ENCODE measurements at regions of chr5 and their contacts with region 1.

Region 1: DNA sequence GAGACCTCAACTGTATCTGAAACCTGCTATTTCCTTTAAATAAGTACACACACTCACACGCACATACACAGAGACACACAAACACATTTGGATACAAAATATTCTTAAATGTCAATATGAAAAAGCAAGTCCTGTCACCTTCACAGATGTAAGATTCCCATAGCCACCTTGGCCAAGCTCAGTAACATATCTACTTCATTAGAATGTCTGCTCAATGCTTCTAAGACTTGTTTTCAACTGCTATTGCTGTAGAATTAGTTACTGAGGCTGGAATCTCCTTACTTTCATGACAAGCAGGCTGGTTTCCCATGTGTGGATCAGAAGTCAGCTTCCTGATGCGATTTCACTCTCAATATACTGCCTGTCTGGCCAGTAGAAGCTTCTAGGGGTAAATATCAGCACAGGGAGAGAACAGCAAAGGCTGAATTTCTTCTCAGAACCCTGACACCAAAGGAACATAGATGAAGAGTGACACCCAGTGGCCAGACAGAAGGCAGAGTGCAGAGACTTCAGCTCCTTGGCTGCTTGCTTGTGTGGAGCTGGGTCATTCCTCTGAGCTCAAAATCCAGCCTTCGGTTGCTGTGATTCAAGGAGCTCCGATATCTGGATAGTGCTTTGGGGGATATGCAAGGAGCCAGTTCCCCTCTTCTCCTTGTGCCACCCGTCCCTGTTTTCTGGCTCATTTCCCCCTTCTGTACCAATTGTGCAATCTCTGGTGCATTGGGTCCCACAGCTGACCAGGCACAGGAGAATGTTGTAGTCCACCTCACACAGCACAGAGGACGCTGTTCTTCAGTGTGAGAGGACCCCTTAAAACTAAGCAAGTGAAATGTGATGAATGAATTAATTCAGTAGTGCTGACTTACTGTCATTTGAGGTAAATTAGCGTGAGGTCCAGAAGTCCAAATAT is 26.6 kb upstream of the ABLIM3 start:
- DNase-seq: peak; percentile 93
- H3K4me3 Mint-ChIP-seq: no peak overlapping the region
- H3K27ac Mint-ChIP-seq: peak overlapping the region; percentile 65
- H3K4me1 Mint-ChIP-seq: peaks cover 45% of the 10 kb centered on the region
- H3K27me3 Mint-ChIP-seq: no peaks in the 10 kb centered on the region
- CTCF ChIP-seq: peak; percentile 97

Region 2: DNA sequence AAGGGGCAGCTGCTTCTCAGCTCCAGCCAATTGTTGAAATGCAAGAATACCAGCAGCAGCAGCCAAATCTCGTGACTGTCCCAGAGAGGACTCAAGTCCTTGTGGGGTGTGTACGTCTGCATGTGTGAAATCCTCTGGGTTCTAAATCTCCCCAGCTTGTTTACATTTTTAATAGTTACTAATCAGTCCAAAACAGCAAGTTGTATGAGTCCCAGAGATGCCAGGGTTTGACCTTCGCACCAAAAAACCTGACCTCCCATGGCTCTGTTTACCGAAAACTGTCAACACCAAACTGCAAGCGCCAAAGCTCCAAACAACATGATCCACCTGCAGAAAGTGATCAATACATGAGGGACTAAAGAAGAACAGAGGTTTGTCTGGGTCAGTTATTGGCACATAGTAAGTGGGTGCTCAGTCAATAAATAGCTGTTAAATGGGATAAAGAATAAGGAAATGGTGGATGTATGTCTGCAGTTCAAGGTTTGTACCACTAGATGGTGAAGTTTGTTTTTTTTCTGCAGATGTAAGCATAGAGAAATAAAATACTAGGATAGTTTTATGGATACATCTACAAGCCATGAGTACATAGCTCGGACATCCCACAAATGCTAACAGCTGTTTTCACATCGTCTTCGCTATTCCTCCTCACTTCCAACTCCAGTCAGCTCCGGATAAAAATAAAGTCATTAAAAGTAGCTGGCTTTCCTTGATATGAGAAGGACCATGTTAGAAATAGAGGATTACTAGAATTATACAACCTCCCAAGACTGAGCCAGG is 373.5 kb before region 1 on chr5:
- CTCF ChIA-PET with region 1: interaction called, 732 read pairs
- POLR2A ChIA-PET with region 1: interaction called, 3 read pairs
- intact Hi-C with region 1: loop called (anchors 2 kb)
- DNase-seq: peak; percentile 77
- H3K4me3 Mint-ChIP-seq: no peak overlapping the region
- H3K27ac Mint-ChIP-seq: no peak overlapping the region
- H3K4me1 Mint-ChIP-seq: peaks cover 5% of the 10 kb centered on the region
- H3K27me3 Mint-ChIP-seq: no peaks in the 10 kb centered on the region
- CTCF ChIP-seq: peak; percentile 88

Region 3: GRCh38 chr5:148831590-148832565 is 282.8 kb before region 1 on chr5:
- CTCF ChIA-PET with region 1: interaction called, 30 read pairs
- POLR2A ChIA-PET with region 1: interaction called, 10 read pairs
- intact Hi-C with region 1: no loop called
- DNase-seq: no peak
- H3K4me3 Mint-ChIP-seq: peak overlapping the region; percentile 90
- H3K27ac Mint-ChIP-seq: peak overlapping the region; percentile 69
- H3K4me1 Mint-ChIP-seq: peaks cover 87% of the 10 kb centered on the region
- H3K27me3 Mint-ChIP-seq: no peaks in the 10 kb centered on the region
- CTCF ChIP-seq: no peak

Region 4: DNA sequence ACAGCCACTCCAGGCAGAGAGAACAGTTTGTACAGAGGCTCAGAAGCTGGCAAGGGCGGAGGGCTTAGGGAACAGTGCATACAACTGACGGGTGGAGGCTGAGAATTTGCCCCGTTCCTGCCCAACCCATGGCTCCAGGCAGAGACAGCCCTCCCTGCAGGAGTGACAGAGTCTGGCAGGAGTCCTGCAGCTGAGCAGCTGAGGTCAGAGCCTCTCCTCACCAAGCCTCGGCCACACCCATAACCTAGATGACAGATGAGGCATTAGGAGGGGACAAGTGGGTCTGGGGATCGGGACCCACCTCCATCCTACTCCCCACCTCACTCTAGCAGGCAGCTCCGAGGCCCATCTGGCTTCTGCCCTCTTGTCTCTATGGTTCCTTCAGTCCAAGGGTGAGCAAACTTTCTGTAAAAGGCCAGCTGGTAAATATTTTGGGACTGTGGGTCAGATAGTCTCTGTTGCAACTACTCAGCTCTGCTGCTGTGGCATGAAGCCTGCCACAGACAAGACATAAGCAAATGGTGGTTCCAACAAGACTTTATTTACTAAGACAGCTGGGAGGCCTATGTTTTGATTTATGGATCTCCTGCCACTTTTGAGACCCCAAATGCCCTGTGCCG is 135.4 kb before region 1 on chr5:
- CTCF ChIA-PET with region 1: interaction called, 18 read pairs
- POLR2A ChIA-PET with region 1: interaction called, 4 read pairs
- intact Hi-C with region 1: no loop called
- DNase-seq: peak; percentile 95
- H3K4me3 Mint-ChIP-seq: peak overlapping the region; percentile 59
- H3K27ac Mint-ChIP-seq: peak overlapping the region; percentile 97
- H3K4me1 Mint-ChIP-seq: peaks cover 70% of the 10 kb centered on the region
- H3K27me3 Mint-ChIP-seq: no peaks in the 10 kb centered on the region
- CTCF ChIP-seq: no peak

Region 5: DNA sequence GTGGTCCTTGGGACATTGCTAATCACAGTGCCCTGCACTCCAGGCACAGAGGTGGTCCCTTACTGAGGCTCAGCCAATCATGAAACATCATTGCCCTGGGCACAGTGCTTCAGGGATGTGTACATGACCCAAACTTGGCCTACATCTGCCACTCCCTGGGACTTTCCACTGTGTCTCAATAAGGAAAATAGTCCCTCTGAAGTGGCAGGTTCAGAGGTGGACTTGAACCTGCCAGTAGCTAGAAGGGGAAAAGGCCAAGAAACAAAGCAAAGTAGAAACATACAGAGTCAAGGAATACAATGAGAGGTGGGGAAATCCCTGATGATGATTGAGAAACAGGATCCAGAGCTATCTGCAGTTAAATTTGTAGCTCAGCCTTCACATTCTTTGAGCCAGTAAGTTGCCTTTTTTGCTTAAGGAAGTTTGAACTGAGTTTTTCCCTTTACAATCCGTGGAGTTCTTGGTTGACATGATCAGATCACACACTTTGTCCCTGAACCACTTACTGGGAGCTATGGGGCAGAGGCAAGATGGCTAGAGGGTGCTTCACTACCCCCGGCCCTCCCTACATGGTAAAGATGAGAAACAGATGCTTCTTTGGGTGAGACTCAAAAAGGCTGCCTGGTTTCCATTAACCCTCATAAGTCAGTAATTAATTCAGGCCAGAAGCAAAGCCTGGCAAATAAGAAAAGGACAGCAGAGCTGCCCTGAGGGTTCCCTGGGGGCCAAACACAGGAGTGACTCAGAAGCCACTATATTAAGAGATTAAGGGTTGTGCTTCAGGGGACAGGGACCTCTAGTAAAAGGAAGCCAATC is 109.4 kb before region 1 on chr5:
- CTCF ChIA-PET with region 1: interaction called, 75 read pairs
- POLR2A ChIA-PET with region 1: interaction called, 12 read pairs
- intact Hi-C with region 1: loop called (anchors 1 kb)
- DNase-seq: peak; percentile 47
- H3K4me3 Mint-ChIP-seq: no peak overlapping the region
- H3K27ac Mint-ChIP-seq: peak overlapping the region; percentile 72
- H3K4me1 Mint-ChIP-seq: peaks cover 54% of the 10 kb centered on the region
- H3K27me3 Mint-ChIP-seq: no peaks in the 10 kb centered on the region
- CTCF ChIP-seq: no peak

Region 6: GRCh38 chr5:149063017-149063687 is 51.5 kb before region 1 on chr5 and contains the start of gene SH3TC2:
- CTCF ChIA-PET with region 1: interaction called, 34 read pairs
- POLR2A ChIA-PET with region 1: interaction called, 3 read pairs
- intact Hi-C with region 1: loop called (anchors 1 kb)
- DNase-seq: peak; percentile 60
- H3K4me3 Mint-ChIP-seq: peak within 1 kb of the TSS; percentile 61
- H3K27ac Mint-ChIP-seq: peak within 1 kb of the TSS; percentile 97
- H3K4me1 Mint-ChIP-seq: peaks cover 66% of the 10 kb centered on the region
- H3K27me3 Mint-ChIP-seq: no peaks in the 10 kb centered on the region
- CTCF ChIP-seq: no peak
- total RNA-seq, gene SH3TC2: 6.2 and 7.2 TPM in 2 replicates

Region 7: DNA sequence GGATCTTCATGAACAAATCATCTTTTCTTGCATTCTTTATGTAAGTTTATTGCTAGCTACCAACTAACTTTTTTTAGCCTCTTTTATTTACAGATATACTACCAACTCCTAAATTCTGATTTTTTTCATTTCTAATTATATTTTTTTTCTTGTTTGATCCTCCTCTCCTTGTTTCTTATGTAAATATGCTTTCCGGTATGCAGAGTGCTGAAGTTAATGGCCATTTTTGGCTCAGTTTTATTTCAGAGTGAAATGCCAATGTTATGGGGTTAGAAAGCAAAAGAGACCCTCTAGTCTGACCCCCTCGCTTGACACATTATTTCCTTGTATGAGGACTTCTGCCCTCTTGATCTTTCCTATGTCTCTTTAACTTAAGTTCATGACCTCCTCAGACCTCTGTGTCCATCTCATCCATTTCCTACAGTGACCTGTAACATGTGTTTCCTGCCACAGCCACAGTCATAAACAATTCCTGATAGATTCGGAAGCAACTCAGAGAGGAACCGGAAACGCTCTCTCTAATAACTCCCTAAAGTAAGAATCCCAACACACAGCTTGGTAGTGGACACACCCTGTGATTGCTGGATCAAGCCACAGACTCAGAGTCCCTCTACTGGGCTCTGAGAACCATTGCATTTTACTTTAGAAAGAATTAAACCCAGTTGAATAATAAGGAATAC is 114.1 kb after region 1 on chr5:
- CTCF ChIA-PET with region 1: interaction called, 48 read pairs
- POLR2A ChIA-PET with region 1: interaction called, 3 read pairs
- intact Hi-C with region 1: no loop called
- DNase-seq: peak; percentile 84
- H3K4me3 Mint-ChIP-seq: peak overlapping the region; percentile 0
- H3K27ac Mint-ChIP-seq: peak overlapping the region; percentile 73
- H3K4me1 Mint-ChIP-seq: peaks cover 6% of the 10 kb centered on the region
- H3K27me3 Mint-ChIP-seq: no peaks in the 10 kb centered on the region
- CTCF ChIP-seq: peak; percentile 83

Measured in MCF 10A (cell line).